Mammary epithelial cell (primary cell): ENCODE measurements at regions of chr1 and their contacts with region 1.

Region 1: GRCh38 chr1:156480411-156481192 is 20.0 kb downstream of the MEF2D start:
- DNase-seq: no peak
- H3K4me3 ChIP-seq: no peak overlapping the region
- H3K27ac ChIP-seq: no peak overlapping the region
- H3K4me1 ChIP-seq: no peaks in the 10 kb centered on the region
- H3K27me3 ChIP-seq: no peaks in the 10 kb centered on the region
- CTCF ChIP-seq: peak; percentile 45 to 76

Region 2: DNA sequence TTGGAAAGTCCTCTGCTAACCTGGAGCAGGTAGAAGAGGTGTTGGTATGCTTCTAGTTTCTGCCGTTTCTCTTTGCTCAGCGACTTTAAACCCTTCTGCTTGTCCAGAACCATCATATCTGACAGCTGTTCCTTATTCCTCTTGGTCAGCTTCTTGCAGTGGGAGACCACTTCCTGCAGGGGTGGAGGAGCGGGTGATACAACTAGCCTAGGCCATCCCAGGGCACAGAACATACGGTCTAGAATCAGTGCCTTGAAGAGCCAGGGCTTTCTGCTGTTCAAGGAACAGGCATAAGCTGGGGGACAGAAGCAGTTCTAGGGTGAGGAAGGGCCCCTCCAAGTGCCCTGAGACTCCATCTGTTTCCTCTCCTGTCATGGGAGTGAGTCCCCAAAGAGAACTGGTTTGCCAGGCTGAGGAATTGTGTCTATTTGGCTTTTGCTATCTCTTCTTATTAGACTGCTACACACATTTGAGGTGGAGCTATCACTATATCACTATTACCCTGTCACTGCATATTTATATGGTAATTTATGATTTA is 59.3 kb after region 1 on chr1:
- CTCF ChIA-PET with region 1: no interaction called
- dilution Hi-C with region 1: loop called (anchors 5 kb)
- in situ Hi-C with region 1: no loop called
- intact Hi-C with region 1: no loop called
- DNase-seq: no peak
- H3K4me3 ChIP-seq: no peak overlapping the region
- H3K27ac ChIP-seq: no peak overlapping the region
- H3K4me1 ChIP-seq: no peaks in the 10 kb centered on the region
- H3K27me3 ChIP-seq: no peaks in the 10 kb centered on the region
- CTCF ChIP-seq: no peak

Region 3: GRCh38 chr1:156571949-156572662 is 91.5 kb after region 1 on chr1 and contains the start of gene IQGAP3:
- CTCF ChIA-PET with region 1: no interaction called
- dilution Hi-C with region 1: loop called (anchors 5 kb)
- in situ Hi-C with region 1: no loop called
- intact Hi-C with region 1: loop called (anchors 5 kb)
- DNase-seq: peak; percentile 81
- H3K4me3 ChIP-seq: peak within 1 kb of the TSS; percentile 66 to 88 (median 76)
- H3K27ac ChIP-seq: peak within 1 kb of the TSS; percentile 76
- H3K4me1 ChIP-seq: peaks cover 16% of the 10 kb centered on the region
- H3K27me3 ChIP-seq: no peaks in the 10 kb centered on the region
- CTCF ChIP-seq: no peak
- total RNA-seq, gene IQGAP3: 1.3 to 35.7 TPM

Region 4: DNA sequence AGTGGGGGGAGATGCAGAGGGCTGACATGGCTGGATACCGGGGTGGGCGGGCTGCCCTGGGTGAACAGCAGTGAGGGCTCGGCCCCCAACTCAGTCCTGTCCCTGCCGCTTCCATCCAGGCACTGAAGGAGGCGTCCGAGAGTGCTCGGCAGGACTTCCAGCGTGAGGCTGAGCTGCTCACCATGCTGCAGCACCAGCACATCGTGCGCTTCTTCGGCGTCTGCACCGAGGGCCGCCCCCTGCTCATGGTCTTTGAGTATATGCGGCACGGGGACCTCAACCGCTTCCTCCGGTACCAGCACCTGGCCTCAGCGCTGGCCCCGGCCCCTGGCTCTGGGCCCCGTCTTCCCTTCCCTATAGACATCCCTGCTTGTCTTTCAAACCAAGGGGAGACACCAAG is 395.7 kb after region 1 on chr1:
- CTCF ChIA-PET with region 1: no interaction called
- dilution Hi-C with region 1: no loop called
- in situ Hi-C with region 1: no loop called
- intact Hi-C with region 1: no loop called
- DNase-seq: no peak
- H3K4me3 ChIP-seq: no peak overlapping the region
- H3K27ac ChIP-seq: no peak overlapping the region
- H3K4me1 ChIP-seq: no peaks in the 10 kb centered on the region
- H3K27me3 ChIP-seq: no peaks in the 10 kb centered on the region
- CTCF ChIP-seq: no peak